Caco-2 (cell line): ENCODE measurements at regions of chr21 and their contacts with region 1.

Region 1: GRCh38 chr21:44873356-44874239 is at the start of gene PTTG1IP:
- DNase-seq: peak; percentile 98 to 99
- H3K4me3 ChIP-seq: peak within 1 kb of the TSS; percentile 95
- H3K4me3 Mint-ChIP-seq: peak within 1 kb of the TSS; percentile 95
- H3K27ac Mint-ChIP-seq: peak within 1 kb of the TSS; percentile 89
- H3K4me1 ChIP-seq: peaks cover 43% of the 10 kb centered on the region
- H3K4me1 Mint-ChIP-seq: peaks cover 28% of the 10 kb centered on the region
- H3K27me3 ChIP-seq: no peaks in the 10 kb centered on the region
- H3K27me3 Mint-ChIP-seq: no peaks in the 10 kb centered on the region
- CTCF ChIP-seq: no peak
- total RNA-seq, gene PTTG1IP: 296 and 306 TPM in 2 replicates

Region 2: GRCh38 chr21:44338971-44339910 is 534.4 kb before region 1 on chr21 and contains the start of gene CFAP410:
- CTCF ChIA-PET with region 1: no interaction called
- POLR2A ChIA-PET with region 1: no interaction called
- intact Hi-C with region 1: loop called (anchors 10 kb)
- DNase-seq: peak; percentile 94 to 96
- H3K4me3 ChIP-seq: peak within 1 kb of the TSS; percentile 95
- H3K4me3 Mint-ChIP-seq: peak within 1 kb of the TSS; percentile 91
- H3K27ac Mint-ChIP-seq: peak within 1 kb of the TSS; percentile 97
- H3K4me1 ChIP-seq: peaks cover 39% of the 10 kb centered on the region
- H3K4me1 Mint-ChIP-seq: peaks cover 41% of the 10 kb centered on the region
- H3K27me3 ChIP-seq: no peaks in the 10 kb centered on the region
- H3K27me3 Mint-ChIP-seq: no peaks in the 10 kb centered on the region
- CTCF ChIP-seq: no peak
- total RNA-seq, gene CFAP410: 16.5 and 20.1 TPM in 2 replicates

Region 3: DNA sequence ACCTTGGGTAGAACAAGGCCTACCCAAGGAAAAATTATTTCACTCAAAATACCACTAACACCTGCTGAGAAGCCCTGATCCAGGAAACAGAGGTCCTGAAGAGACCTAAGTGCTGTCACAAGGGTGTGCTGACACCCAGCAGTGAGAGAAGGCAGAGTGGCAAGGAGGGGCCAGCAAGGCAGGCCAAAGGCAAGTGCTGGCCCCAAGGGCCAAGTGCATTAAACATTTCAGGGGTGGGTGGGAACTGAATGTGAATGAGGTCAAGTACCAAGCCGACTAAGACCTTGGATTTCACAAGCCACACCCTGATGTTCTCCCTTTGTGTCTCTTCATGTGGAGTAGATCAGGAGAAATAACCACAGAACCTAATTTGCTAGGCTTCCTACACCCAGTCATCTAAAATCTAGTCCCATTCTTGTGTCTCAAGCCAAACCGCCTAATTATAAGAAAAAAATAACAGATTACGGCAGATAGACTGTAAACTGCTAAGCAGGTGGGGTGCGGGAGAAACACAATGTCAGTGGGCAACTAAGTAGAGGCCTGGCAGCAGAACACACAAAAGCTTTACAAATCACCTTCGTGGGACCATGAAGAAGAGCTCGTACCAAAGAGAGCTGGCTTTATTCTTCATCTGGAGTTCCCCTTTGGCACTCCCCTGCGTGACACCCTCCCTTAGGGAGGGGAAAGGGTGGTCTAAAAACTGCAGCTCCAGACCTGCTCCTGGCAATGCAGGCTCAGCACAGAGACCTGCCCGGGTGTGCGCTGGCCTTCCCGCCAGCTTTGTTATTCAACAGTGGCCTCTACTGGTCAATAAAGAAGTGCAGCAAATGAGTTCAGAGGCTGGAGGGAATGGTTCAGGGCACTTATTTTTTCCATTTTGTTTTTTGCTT is 80.7 kb before region 1 on chr21:
- CTCF ChIA-PET with region 1: interaction called, 16 read pairs
- POLR2A ChIA-PET with region 1: no interaction called
- intact Hi-C with region 1: no loop called
- DNase-seq: peak; percentile 55 to 75
- H3K4me3 ChIP-seq: no peak overlapping the region
- H3K4me3 Mint-ChIP-seq: peak overlapping the region; percentile 40
- H3K27ac Mint-ChIP-seq: peak overlapping the region; percentile 53
- H3K4me1 ChIP-seq: peaks cover 24% of the 10 kb centered on the region
- H3K4me1 Mint-ChIP-seq: peaks cover 19% of the 10 kb centered on the region
- H3K27me3 ChIP-seq: no peaks in the 10 kb centered on the region
- H3K27me3 Mint-ChIP-seq: no peaks in the 10 kb centered on the region
- CTCF ChIP-seq: peak; percentile 77

Region 4: GRCh38 chr21:44801468-44802395 is 71.9 kb before region 1 on chr21 and contains the start of gene UBE2G2:
- CTCF ChIA-PET with region 1: interaction called, 13 read pairs
- POLR2A ChIA-PET with region 1: interaction called, 24 read pairs
- intact Hi-C with region 1: loop called (anchors 1 kb)
- DNase-seq: peak; percentile 82 to 91
- H3K4me3 ChIP-seq: peak within 1 kb of the TSS; percentile 72
- H3K4me3 Mint-ChIP-seq: peak within 1 kb of the TSS; percentile 84
- H3K27ac Mint-ChIP-seq: peak within 1 kb of the TSS; percentile 77
- H3K4me1 ChIP-seq: peaks cover 22% of the 10 kb centered on the region
- H3K4me1 Mint-ChIP-seq: peaks cover 14% of the 10 kb centered on the region
- H3K27me3 ChIP-seq: no peaks in the 10 kb centered on the region
- H3K27me3 Mint-ChIP-seq: no peaks in the 10 kb centered on the region
- CTCF ChIP-seq: no peak
- total RNA-seq, gene UBE2G2: 91.3 and 103 TPM in 2 replicates

Region 5: GRCh38 chr21:44817506-44817880 is 56.1 kb before region 1 on chr21:
- CTCF ChIA-PET with region 1: interaction called, 3 read pairs
- POLR2A ChIA-PET with region 1: interaction called, 11 read pairs
- intact Hi-C with region 1: loop called (anchors 5 kb)
- DNase-seq: peak; percentile 78 to 87
- H3K4me3 ChIP-seq: peak overlapping the region; percentile 81
- H3K4me3 Mint-ChIP-seq: peak overlapping the region; percentile 68
- H3K27ac Mint-ChIP-seq: no peak overlapping the region
- H3K4me1 ChIP-seq: peaks cover 15% of the 10 kb centered on the region
- H3K4me1 Mint-ChIP-seq: peaks cover 5% of the 10 kb centered on the region
- H3K27me3 ChIP-seq: no peaks in the 10 kb centered on the region
- H3K27me3 Mint-ChIP-seq: no peaks in the 10 kb centered on the region
- CTCF ChIP-seq: no peak

Region 6: GRCh38 chr21:44836666-44837471 is 36.7 kb before region 1 on chr21:
- CTCF ChIA-PET with region 1: no interaction called
- POLR2A ChIA-PET with region 1: no interaction called
- intact Hi-C with region 1: loop called (anchors 5 kb)
- DNase-seq: peak; percentile 78 to 86
- H3K4me3 ChIP-seq: no peak overlapping the region
- H3K4me3 Mint-ChIP-seq: no peak overlapping the region
- H3K27ac Mint-ChIP-seq: peak overlapping the region; percentile 59
- H3K4me1 ChIP-seq: peaks cover 10% of the 10 kb centered on the region
- H3K4me1 Mint-ChIP-seq: no peaks in the 10 kb centered on the region
- H3K27me3 ChIP-seq: no peaks in the 10 kb centered on the region
- H3K27me3 Mint-ChIP-seq: no peaks in the 10 kb centered on the region
- CTCF ChIP-seq: no peak

Region 7: GRCh38 chr21:44849616-44850130 is 23.9 kb before region 1 on chr21:
- CTCF ChIA-PET with region 1: no interaction called
- POLR2A ChIA-PET with region 1: no interaction called
- intact Hi-C with region 1: loop called (anchors 1 kb)
- DNase-seq: peak; percentile 55 to 79
- H3K4me3 ChIP-seq: no peak overlapping the region
- H3K4me3 Mint-ChIP-seq: no peak overlapping the region
- H3K27ac Mint-ChIP-seq: no peak overlapping the region
- H3K4me1 ChIP-seq: peaks cover 37% of the 10 kb centered on the region
- H3K4me1 Mint-ChIP-seq: peaks cover 1% of the 10 kb centered on the region
- H3K27me3 ChIP-seq: no peaks in the 10 kb centered on the region
- H3K27me3 Mint-ChIP-seq: no peaks in the 10 kb centered on the region
- CTCF ChIP-seq: no peak